ENCODE measurements at regions of chr7 and their contacts with region 1.

Region 1: DNA sequence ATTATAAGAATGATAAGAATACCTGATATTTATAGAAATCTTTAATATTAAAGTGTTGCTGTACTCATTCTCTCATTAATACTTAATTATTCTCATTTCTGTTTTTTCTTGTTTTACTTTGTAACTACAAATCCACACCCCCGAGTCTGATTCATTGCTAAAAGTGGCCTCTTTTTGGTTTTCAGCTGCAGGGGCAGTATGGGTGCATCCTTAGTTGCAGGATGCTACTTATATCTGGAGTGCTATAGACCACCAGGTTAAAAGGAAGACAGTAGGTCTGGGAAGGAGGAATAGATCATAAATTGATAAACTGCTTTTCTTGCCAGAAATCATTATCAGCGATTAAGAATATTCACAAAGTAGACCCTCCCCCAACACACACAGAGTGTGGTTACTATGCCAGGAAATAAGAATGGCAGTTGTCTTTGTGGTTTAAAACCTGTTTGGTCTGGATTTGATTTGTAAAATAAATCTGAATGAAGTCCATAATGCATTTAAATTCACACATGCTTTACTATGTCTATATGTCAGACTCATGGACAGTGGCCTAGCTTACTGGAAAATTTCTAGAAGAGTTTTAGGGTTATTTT is 96.5 kb downstream of the NRF1 start:
- DNase-seq: no peak
- H3K4me3 ChIP-seq: no peak overlapping the region
- H3K27ac ChIP-seq: no peak overlapping the region
- H3K4me1 ChIP-seq: no peaks in the 10 kb centered on the region
- H3K27me3 ChIP-seq: no peaks in the 10 kb centered on the region
- CTCF ChIP-seq: no peak

Region 2: DNA sequence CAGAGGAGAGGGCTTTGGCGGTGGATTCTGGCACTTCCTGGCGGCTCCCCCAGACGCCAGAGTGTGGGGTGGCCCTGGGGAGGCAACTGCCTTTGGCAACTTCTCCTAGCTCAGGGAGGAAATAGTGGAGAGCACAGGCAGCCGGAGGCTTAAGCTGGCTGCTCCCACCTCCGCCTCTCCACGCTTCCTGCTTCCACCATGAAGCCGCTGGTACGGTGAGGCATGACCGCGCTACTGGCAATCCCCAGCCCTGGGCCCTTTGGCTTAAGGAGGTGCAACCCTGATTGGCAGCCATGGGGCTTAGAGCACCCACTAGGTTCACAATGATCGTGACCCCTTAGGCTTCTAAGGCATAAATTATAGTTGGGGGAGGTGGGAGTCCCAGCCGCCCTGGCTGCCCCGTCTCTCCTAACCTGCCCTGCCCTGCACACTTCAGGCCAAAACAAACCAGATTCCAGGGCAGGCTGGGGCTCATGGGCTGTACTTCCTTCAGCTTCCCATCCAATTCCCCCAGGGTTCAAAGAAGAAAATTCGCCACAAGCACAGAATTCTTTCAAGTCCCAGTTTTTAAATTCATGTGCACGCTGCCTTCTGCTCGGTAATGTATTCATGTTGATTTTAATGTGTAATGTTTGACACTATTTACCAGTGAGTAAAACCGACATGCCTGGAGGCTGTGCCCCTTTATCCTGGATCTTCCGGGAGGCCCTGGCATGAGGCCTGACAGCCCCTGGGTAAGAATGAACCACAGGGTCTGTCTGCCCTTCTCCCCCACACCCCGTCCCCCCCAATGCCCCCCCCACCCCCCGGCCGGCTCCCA is 1586.1 kb before region 1 on chr7:
- CTCF ChIA-PET with region 1: no interaction called
- POLR2A ChIA-PET with region 1: interaction called, 10 read pairs
- intact Hi-C with region 1: no loop called
- DNase-seq: peak; percentile 51
- H3K4me3 ChIP-seq: no peak overlapping the region
- H3K27ac ChIP-seq: no peak overlapping the region
- H3K4me1 ChIP-seq: peaks cover 9% of the 10 kb centered on the region
- H3K27me3 ChIP-seq: no peaks in the 10 kb centered on the region
- CTCF ChIP-seq: no peak